Right ventricle myocardium inferior (tissue), 1 donor: ENCODE measurements at regions of chr18 and their contacts with region 1.

Region 1: GRCh38 chr18:57273194-57273593 is 79.2 kb upstream of the ST8SIA3 start:
- DNase-seq: no peak
- ATAC-seq: no peak

Region 2: GRCh38 chr18:56910967-56911366 is 362.2 kb before region 1 on chr18:
- intact Hi-C with region 1: no loop called
- DNase-seq: no peak
- ATAC-seq: no peak

Region 3: GRCh38 chr18:57249883-57250282 is 23.3 kb before region 1 on chr18:
- intact Hi-C with region 1: loop called (anchors 2 kb)
- DNase-seq: no peak
- ATAC-seq: no peak

Region 4: GRCh38 chr18:57806978-57807285 is 533.7 kb after region 1 on chr18:
- intact Hi-C with region 1: no loop called
- DNase-seq: no peak
- ATAC-seq: no peak